ENCODE measurements at regions of chr10 and their contacts with region 1.

Region 1: GRCh38 chr10:78047314-78047891 is 13.7 kb downstream of the RPS24 start:
- DNase-seq: peak; percentile 82 to 97 (median 90)
- H3K4me3 ChIP-seq: no peak overlapping the region
- H3K27ac ChIP-seq: no peak overlapping the region
- H3K4me1 ChIP-seq: peaks cover 0 to 13% of the 10 kb centered on the region in 2 donors
- H3K27me3 ChIP-seq: no peaks in the 10 kb centered on the region
- CTCF ChIP-seq: peak; percentile 84 to 92 (median 90)
- POLR2A ChIP-seq: no peak

Region 2: GRCh38 chr10:77737608-77738007 is 309.8 kb before region 1 on chr10:
- intact Hi-C with region 1: no loop called
- DNase-seq: no peak
- H3K4me3 ChIP-seq: no peak overlapping the region
- H3K27ac ChIP-seq: no peak overlapping the region
- H3K4me1 ChIP-seq: peaks cover 0 to under 1% of the 10 kb centered on the region in 2 donors
- H3K27me3 ChIP-seq: no peaks in the 10 kb centered on the region
- CTCF ChIP-seq: no peak
- POLR2A ChIP-seq: no peak

Region 3: DNA sequence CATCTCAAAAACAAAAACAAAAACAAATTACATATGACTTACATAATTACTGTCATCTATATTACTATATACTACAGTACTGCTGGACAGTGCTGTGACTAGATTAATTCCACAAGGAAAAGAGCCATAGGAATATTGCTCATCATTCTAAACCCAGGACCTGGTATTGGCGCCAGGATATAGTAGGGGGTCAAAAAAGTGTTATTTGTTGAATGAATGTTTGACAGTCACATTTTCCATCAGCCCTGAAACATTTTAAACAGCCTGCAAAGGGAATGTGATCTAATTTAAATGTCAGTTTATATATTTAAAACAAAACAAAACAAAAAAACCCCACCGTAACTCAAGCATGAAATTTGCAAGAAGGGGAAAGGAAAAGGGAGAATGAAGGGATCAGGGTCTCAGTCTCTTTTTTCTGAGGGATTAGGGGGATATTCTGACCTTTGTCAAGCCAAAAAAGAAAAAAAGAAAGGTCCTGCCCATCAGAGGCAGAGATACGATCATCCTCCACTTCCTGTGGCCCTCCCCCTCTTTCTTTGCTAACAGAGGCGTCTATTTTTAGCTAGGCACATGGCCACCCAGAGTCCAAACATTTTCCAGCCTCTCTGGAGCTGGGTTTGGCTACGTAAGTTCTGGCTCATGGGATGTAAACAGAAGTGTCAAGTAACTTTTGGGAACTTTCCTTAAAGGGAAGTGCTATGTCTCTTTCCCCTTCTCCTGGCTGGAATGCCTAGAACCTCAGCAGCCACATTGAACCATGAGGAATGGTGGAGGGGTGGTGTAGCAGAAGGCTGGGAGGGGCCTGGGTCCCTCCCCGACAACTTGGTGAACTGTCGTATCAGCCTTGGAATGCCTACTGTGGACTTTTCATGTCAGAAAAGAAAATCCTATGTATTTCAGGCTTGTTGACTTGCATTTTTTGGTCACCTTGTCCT is 76.3 kb before region 1 on chr10:
- intact Hi-C with region 1: no loop called
- DNase-seq: peak; percentile 74 to 93 (median 85)
- H3K4me3 ChIP-seq: peak overlapping the region in 1 of 4 donors; percentile 14
- H3K27ac ChIP-seq: peak overlapping the region; percentile 10 to 88 (median 67)
- H3K4me1 ChIP-seq: peaks cover 13% of the 10 kb centered on the region in 2 donors
- H3K27me3 ChIP-seq: no peaks in the 10 kb centered on the region
- CTCF ChIP-seq: no peak
- POLR2A ChIP-seq: no peak

Region 4: GRCh38 chr10:78004215-78005026 is 43.0 kb before region 1 on chr10:
- intact Hi-C with region 1: no loop called
- DNase-seq: peak; percentile 54 to 87 (median 82)
- H3K4me3 ChIP-seq: no peak overlapping the region
- H3K27ac ChIP-seq: peak overlapping the region in 4 of 5 donors; percentile 26 to 74 (median 53)
- H3K4me1 ChIP-seq: no peaks in the 10 kb centered on the region
- H3K27me3 ChIP-seq: no peaks in the 10 kb centered on the region
- CTCF ChIP-seq: peak in 3 of 6 experiments; percentile 18 to 32 (median 20)
- POLR2A ChIP-seq: no peak

Region 5: DNA sequence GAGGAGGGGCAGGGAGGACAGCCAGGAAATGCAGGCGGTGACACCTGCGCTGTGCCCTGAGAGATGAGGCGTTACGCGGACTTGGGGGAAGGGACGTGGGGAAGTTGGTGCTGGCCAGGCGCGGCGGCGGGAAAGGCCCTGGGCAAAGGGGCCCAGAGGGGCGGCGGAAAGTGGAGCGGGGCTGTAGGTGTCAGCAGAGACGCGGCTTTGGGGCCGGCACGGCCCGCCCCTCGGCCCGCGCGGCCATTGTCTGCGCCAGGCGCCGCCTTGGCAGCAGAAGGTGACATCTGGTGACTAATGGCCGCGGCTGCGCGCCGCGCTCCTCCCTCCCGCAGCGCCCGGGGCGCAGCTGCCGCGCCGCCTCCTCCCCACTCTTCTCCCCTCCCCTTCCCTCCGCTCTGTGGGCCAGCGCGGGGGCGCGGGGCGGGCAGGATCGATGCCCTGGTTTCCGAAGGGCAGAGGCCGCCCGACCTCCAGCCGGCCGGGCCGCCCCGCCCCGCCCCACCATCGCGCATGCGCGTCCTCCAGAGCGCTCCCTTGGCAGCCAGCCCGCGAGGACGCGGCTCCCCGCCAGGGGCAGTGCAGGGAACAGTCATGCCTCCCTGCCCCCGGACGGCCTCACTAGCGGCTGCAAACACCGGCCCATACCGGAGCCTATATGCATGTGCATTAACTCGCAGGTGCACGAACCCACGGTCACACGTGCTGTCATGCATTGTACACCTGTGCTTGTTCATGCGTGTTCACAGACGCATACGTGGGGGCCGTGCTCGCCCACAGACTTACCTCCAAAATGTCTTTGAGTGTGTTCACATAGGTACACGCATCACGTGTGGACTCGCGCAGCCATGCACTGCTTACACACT is 255.8 kb after region 1 on chr10:
- intact Hi-C with region 1: loop called (anchors 10 kb)
- DNase-seq: peak; percentile 94 to 98 (median 96)
- H3K4me3 ChIP-seq: peak overlapping the region in 3 of 4 donors; percentile 29 to 58 (median 54)
- H3K27ac ChIP-seq: peak overlapping the region; percentile 35 to 89 (median 78)
- H3K4me1 ChIP-seq: peaks cover 0 to 17% of the 10 kb centered on the region in 2 donors
- H3K27me3 ChIP-seq: no peaks in the 10 kb centered on the region
- CTCF ChIP-seq: peak; percentile 34 to 90 (median 68)
- POLR2A ChIP-seq: peak; percentile 56 to 66

Measured in adrenal gland (tissue), 19 donors.